Posterior vena cava (tissue), 2 donors: ENCODE measurements at regions of chr1 and their contacts with region 1.

Region 1: DNA sequence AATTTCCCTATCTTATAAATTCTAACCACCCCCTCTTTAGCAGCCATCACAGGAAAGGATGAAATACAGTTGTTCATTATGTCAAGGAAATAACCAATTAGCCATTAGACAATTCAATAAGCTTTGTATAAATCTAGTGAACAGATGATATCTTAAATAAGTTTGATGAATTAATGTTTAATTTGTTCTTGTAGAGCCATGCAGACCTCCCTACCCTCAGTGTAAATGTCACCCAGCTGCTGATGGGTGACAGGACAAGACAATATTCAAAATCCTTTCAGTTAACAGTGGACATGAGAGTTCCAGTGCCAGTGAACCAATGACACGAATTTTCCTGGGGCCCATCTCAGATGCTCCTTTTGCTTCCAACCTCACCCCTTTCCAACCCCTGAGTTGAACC is 395.9 kb downstream of the KCTD3 start:
- DNase-seq: no peak

Region 2: GRCh38 chr1:215273838-215274516 is 689.1 kb before region 1 on chr1:
- intact Hi-C with region 1: no loop called
- DNase-seq: no peak

Region 3: GRCh38 chr1:217506878-217507277 is 1543.8 kb after region 1 on chr1:
- intact Hi-C with region 1: loop called in 1 of 2 experiments (anchors 5 kb)
- DNase-seq: no peak